ENCODE measurements at regions of chr12 and their contacts with region 1.

Region 1: DNA sequence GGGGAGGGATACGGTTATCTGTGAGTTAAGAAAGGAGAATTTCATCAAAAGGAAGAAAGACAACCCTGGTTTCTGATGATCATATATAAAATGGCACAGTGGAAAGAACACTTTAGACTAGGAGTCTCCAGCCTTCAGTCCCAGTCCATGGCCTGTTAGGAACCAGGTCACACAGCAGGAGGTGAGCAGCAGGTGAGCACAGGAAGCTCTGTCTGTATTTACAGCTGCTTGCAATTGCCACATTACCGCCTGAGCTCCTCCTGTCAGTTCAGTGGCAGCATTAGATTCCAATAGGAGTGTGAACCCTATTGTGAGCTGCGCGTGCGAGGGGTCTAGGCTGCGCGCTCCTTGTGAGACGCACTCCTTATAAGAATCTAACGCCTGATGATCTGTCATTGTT is 137.9 kb downstream of the BTG1 start:
- DNase-seq: peak in 2 of 14 experiments; percentile 32 to 34
- ATAC-seq: peak; percentile 35
- H3K4me3 ChIP-seq: no peak overlapping the region
- H3K4me3 Mint-ChIP-seq: no peak overlapping the region
- H3K27ac ChIP-seq: no peak overlapping the region
- H3K27ac Mint-ChIP-seq: peak overlapping the region; percentile 12
- H3K4me1 ChIP-seq: peaks cover 12% of the 10 kb centered on the region
- H3K4me1 Mint-ChIP-seq: peaks cover 91% of the 10 kb centered on the region
- H3K27me3 ChIP-seq: no peaks in the 10 kb centered on the region
- H3K27me3 Mint-ChIP-seq: no peaks in the 10 kb centered on the region
- CTCF ChIP-seq: no peak

Region 2: DNA sequence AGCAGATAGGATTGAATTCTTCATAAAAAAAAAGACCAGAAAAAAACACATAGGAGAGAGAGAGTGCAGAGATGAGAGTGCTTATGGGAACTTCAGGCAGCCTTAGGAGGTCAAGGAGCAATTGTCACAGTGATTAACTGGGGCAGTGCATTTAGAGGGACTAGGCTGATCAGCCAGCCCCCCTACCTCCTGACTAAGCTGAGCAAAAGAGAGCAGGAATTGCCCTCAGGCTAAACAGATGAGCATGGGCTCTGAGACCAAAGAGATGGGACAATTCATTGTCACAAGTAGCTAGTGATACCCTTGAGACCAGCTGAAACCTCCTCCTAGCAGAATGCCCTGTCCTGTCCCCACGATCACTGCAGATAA is 13.9 kb after region 1 on chr12:
- CTCF ChIA-PET with region 1: interaction called, 5 read pairs
- POLR2A ChIA-PET with region 1: interaction called, 14 read pairs
- intact Hi-C with region 1: no loop called
- DNase-seq: no peak
- ATAC-seq: no peak
- H3K4me3 ChIP-seq: no peak overlapping the region
- H3K4me3 Mint-ChIP-seq: no peak overlapping the region
- H3K27ac ChIP-seq: no peak overlapping the region
- H3K27ac Mint-ChIP-seq: peak overlapping the region; percentile 55
- H3K4me1 ChIP-seq: peaks cover 9% of the 10 kb centered on the region
- H3K4me1 Mint-ChIP-seq: peaks cover 45% of the 10 kb centered on the region
- H3K27me3 ChIP-seq: no peaks in the 10 kb centered on the region
- H3K27me3 Mint-ChIP-seq: no peaks in the 10 kb centered on the region
- CTCF ChIP-seq: no peak

Measured in CD4-positive, alpha-beta T cell (primary cell).